Calu3 (cell line): ENCODE measurements at regions of chr14 and their contacts with region 1.

Region 1: DNA sequence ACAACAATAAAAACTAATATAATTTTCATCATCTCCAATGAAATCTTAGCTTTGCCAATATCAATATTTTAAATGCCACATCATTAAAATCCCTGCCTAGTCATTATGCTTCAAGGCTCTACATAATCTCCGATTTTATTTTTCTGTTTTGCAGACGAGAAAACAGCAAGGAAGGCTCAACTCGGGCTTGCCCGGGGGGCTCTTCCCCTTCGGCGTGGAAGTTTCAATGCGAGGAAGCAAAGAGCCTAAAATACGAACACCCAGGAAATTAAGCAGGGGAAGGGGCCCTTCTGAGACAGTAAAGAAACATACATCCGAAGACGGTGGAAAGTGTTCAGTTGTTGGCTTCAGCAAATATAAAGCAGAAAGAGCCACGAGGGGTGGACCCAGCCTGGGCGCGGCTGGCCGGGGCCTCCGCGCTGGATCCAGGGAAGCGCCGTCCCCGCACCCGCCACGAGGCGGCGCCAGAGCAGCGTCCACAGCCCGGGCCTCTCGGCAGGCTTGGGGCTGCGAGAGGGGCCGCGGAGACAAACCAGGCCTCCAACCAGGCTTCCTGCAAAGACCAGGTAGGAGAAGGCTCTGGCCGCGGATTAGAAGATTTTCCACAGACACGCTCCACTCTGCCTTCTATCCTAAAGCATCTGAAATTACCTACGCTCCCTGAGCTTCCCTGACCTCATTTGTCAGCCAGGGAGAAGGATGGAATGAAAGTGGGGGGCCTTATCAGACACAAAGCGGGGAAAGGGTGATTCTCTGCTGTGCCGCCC is 77.2 kb downstream of the SERPINA3 start:
- DNase-seq: peak; percentile 84
- H3K4me3 Mint-ChIP-seq: no peak overlapping the region
- H3K27ac Mint-ChIP-seq: no peak overlapping the region
- H3K4me1 Mint-ChIP-seq: no peaks in the 10 kb centered on the region
- H3K27me3 Mint-ChIP-seq: no peaks in the 10 kb centered on the region
- CTCF ChIP-seq: peak; percentile 92

Region 2: GRCh38 chr14:94748667-94749347 is 59.4 kb after region 1 on chr14:
- CTCF ChIA-PET with region 1: interaction called, 3 read pairs
- intact Hi-C with region 1: loop called (anchors 2 kb)
- DNase-seq: peak; percentile 72
- H3K4me3 Mint-ChIP-seq: peak overlapping the region; percentile 37
- H3K27ac Mint-ChIP-seq: no peak overlapping the region
- H3K4me1 Mint-ChIP-seq: peaks cover 10% of the 10 kb centered on the region
- H3K27me3 Mint-ChIP-seq: peaks cover 35% of the 10 kb centered on the region
- CTCF ChIP-seq: peak; percentile 43

Region 3: DNA sequence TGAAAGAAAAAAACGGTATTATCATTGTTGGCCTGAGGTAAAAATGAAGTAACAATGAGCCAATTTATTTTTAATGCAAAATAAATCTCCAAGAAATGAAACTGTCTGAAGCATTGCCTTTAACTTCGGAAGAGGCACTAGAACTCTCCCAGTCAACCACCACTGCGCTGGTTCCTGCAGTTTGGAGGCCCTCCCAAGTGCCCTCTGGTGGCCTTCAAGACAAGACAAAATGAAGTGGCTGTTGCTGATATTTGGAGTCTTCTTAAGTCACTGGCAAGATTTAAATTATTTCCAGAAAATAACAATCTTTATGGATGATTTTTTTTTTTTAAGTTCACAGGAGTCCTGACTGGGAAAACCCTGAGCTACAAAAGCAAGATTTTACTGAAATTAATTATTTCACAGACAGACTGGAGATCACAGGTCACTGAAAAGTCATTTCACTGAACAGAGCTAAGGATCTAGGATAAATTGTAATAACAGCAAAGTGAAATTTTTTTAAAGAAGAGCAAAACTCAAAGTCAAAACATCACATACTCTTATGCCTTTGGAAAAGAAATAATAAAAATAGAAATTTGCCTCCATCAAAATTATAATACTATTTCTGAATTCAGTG is 409.7 kb after region 1 on chr14:
- CTCF ChIA-PET with region 1: interaction called, 3 read pairs
- intact Hi-C with region 1: loop called (anchors 5 kb)
- DNase-seq: peak; percentile 41
- H3K4me3 Mint-ChIP-seq: no peak overlapping the region
- H3K27ac Mint-ChIP-seq: no peak overlapping the region
- H3K4me1 Mint-ChIP-seq: no peaks in the 10 kb centered on the region
- H3K27me3 Mint-ChIP-seq: no peaks in the 10 kb centered on the region
- CTCF ChIP-seq: no peak

Region 4: GRCh38 chr14:95431199-95432143 is 742.1 kb after region 1 on chr14:
- CTCF ChIA-PET with region 1: interaction called, 3 read pairs
- intact Hi-C with region 1: loop called (anchors 2 kb)
- DNase-seq: peak; percentile 31
- H3K4me3 Mint-ChIP-seq: no peak overlapping the region
- H3K27ac Mint-ChIP-seq: no peak overlapping the region
- H3K4me1 Mint-ChIP-seq: peaks cover 9% of the 10 kb centered on the region
- H3K27me3 Mint-ChIP-seq: no peaks in the 10 kb centered on the region
- CTCF ChIP-seq: peak; percentile 37